Natural killer cell (primary cell): ENCODE measurements at regions of chr9 and their contacts with region 1.

Region 1: DNA sequence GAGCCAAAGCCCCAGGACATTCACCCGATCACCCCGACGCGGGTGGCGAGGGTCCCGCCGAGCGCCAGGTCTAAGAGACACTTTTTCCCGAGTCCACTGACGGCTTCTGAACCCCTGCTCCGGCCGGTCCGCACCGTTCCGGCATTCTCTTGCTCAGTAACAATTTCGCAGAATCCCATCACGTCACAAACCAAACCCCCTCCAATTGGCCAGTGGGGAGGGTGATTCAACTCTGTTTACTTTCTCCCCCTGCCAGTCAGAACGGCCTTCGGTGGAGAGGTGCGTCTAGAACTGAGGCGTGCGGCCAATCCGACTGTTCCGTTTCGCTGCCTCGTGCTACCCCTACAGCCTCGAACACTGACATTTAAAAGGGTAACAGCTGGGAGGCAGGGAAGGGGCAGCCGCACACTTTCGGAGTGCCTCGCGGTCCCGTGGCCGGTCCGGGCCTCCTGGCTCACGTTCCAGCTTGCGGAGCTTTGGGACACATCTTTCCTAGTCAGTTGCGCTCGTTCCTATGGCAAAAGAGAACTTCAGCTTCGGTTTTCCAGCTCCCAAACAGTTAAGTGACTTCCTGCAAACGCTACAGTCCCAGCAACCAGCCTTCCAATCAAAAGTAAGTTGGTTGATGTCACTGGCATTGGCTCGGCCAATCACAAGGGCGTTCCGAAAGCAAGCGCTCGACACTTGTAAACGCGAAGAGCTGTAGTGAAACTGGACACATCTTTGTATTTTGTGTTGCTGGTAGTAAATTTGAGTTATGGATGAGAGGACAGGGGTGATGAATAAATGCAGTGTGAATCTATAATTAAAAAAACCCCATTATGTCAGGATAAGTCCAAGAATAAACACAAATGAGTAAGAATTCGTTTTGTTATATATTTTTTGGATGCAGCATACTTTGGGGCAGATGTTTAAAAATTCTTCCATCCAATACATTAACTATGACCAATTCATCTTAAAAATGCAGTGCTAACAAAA is at the start of gene KLF9:
- DNase-seq: peak; percentile 88 to 97
- ATAC-seq: peak; percentile 71 to 92 (median 82)
- H3K4me3 ChIP-seq: peak within 1 kb of the TSS; percentile 94
- H3K4me3 Mint-ChIP-seq: peak within 1 kb of the TSS; percentile 99
- H3K27ac ChIP-seq: peak within 1 kb of the TSS; percentile 95
- H3K27ac Mint-ChIP-seq: peak within 1 kb of the TSS; percentile 99 to 100
- H3K4me1 ChIP-seq: peaks cover 38% of the 10 kb centered on the region
- H3K4me1 Mint-ChIP-seq: peaks cover 44% of the 10 kb centered on the region in 2 donors
- H3K27me3 ChIP-seq: no peaks in the 10 kb centered on the region
- H3K27me3 Mint-ChIP-seq: no peaks in the 10 kb centered on the region
- CTCF ChIP-seq: no peak
- total RNA-seq, gene KLF9: 47.7 to 79.3 (median 51.2) TPM

Region 2: DNA sequence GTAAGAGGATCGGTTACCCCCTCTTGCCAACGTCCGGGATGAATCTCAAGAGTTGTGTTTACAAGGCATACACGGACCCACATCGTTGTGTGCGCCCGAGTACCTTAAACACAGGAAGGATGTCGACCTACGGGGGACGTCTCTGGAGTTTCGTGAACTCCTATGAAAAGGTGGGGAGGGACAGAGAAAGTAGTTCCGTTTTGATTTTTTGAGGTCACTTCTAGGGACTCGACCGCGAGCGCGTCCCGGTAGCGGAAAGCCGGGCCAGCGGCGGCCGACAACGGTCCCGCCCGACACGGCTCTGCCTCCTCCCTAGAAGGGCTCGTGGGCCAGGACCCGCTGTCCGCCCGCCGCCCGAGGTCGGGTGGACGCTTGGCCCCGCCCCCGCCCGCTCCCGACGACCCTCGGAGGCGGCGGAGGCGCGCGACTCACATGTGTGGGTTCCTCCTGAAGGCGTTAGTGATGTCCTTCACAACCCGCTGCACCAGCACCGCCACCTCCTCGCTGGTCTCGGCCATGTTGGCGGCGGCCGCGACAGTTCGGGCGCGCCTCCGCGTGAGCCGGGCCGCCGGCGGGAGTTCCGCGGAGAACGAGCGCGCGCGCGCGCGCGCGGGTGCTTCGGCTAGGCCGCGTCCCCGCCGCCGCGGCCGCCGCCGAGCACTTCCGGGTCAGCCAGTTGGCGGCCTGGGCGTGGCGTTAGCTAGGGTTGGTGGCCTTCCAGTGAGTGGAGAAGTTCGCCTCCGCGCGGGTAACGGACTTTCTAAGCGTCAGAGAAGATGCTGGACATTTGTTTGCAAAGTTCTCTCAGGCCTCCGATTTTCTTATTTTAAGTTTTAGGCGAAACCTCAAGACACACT is 654.4 kb before region 1 on chr9 and contains the start of gene PTAR1:
- intact Hi-C with region 1: loop called (anchors 5 kb)
- DNase-seq: peak; percentile 89 to 95
- ATAC-seq: peak; percentile 84 to 94 (median 84)
- H3K4me3 ChIP-seq: peak within 1 kb of the TSS; percentile 56
- H3K4me3 Mint-ChIP-seq: peak within 1 kb of the TSS; percentile 99
- H3K27ac ChIP-seq: peak within 1 kb of the TSS; percentile 92
- H3K27ac Mint-ChIP-seq: peak within 1 kb of the TSS; percentile 96 to 97
- H3K4me1 ChIP-seq: peaks cover 8% of the 10 kb centered on the region
- H3K4me1 Mint-ChIP-seq: peaks cover 26 to 39% of the 10 kb centered on the region in 2 donors
- H3K27me3 ChIP-seq: no peaks in the 10 kb centered on the region
- H3K27me3 Mint-ChIP-seq: no peaks in the 10 kb centered on the region
- CTCF ChIP-seq: no peak
- total RNA-seq, gene PTAR1: 76.4 to 87.9 (median 85.6) TPM

Region 3: GRCh38 chr9:70340572-70340971 is 73.5 kb before region 1 on chr9:
- intact Hi-C with region 1: loop called (anchors 5 kb)
- DNase-seq: peak in 1 of 2 donors; percentile 47
- ATAC-seq: no peak
- H3K4me3 ChIP-seq: no peak overlapping the region
- H3K4me3 Mint-ChIP-seq: no peak overlapping the region
- H3K27ac ChIP-seq: no peak overlapping the region
- H3K27ac Mint-ChIP-seq: no peak overlapping the region
- H3K4me1 ChIP-seq: no peaks in the 10 kb centered on the region
- H3K4me1 Mint-ChIP-seq: peaks cover 0 to 10% of the 10 kb centered on the region in 2 donors
- H3K27me3 ChIP-seq: no peaks in the 10 kb centered on the region
- H3K27me3 Mint-ChIP-seq: no peaks in the 10 kb centered on the region
- CTCF ChIP-seq: peak; percentile 72

Region 4: DNA sequence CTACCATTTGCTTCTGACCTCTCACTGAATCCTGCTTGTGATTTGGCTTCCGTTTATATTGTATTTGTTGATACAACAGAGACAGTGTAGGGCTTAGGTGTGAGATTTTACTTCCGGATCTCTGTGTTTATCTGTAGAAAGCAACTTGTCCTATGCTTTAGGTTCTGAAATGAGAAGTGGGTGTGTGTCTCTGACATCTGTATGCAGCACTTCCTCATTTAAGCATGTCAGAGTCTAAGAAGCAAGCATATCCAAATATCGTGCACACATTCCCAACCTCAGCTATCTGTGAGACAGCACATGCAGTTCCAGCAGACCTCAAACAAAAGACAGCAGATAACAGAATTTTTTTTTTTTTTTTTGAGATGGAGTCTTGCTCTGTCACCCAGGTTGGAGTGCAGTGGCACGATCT is 15.9 kb before region 1 on chr9:
- intact Hi-C with region 1: loop called (anchors 1 kb)
- DNase-seq: peak in 1 of 2 donors; percentile 75
- ATAC-seq: peak; percentile 92 to 98 (median 97)
- H3K4me3 ChIP-seq: no peak overlapping the region
- H3K4me3 Mint-ChIP-seq: peak overlapping the region; percentile 83
- H3K27ac ChIP-seq: peak overlapping the region; percentile 83
- H3K27ac Mint-ChIP-seq: peak overlapping the region; percentile 84 to 93
- H3K4me1 ChIP-seq: peaks cover 39% of the 10 kb centered on the region
- H3K4me1 Mint-ChIP-seq: peaks cover 59 to 67% of the 10 kb centered on the region in 2 donors
- H3K27me3 ChIP-seq: no peaks in the 10 kb centered on the region
- H3K27me3 Mint-ChIP-seq: no peaks in the 10 kb centered on the region
- CTCF ChIP-seq: no peak

Region 5: GRCh38 chr9:72364679-72365524 is 1950.8 kb after region 1 on chr9 and contains the start of gene ZFAND5:
- intact Hi-C with region 1: loop called (anchors 10 kb)
- DNase-seq: peak; percentile 97
- ATAC-seq: peak; percentile 80 to 93 (median 82)
- H3K4me3 ChIP-seq: peak within 1 kb of the TSS; percentile 76
- H3K4me3 Mint-ChIP-seq: peak within 1 kb of the TSS; percentile 94
- H3K27ac ChIP-seq: peak within 1 kb of the TSS; percentile 99
- H3K27ac Mint-ChIP-seq: peak within 1 kb of the TSS; percentile 99
- H3K4me1 ChIP-seq: peaks cover 14% of the 10 kb centered on the region
- H3K4me1 Mint-ChIP-seq: peaks cover 47 to 51% of the 10 kb centered on the region in 2 donors
- H3K27me3 ChIP-seq: no peaks in the 10 kb centered on the region
- H3K27me3 Mint-ChIP-seq: no peaks in the 10 kb centered on the region
- CTCF ChIP-seq: no peak
- total RNA-seq, gene ZFAND5: 307 to 450 (median 318) TPM